CD4-positive, alpha-beta T cell (primary cell): ENCODE measurements at regions of chr4 and their contacts with region 1.

Region 1: GRCh38 chr4:39697740-39698423 is at the start of gene UBE2K:
- DNase-seq: peak; percentile 78 to 96 (median 86)
- ATAC-seq: peak; percentile 83
- H3K4me3 ChIP-seq: peak within 1 kb of the TSS; percentile 99
- H3K4me3 Mint-ChIP-seq: peak within 1 kb of the TSS; percentile 96
- H3K27ac ChIP-seq: peak within 1 kb of the TSS; percentile 92 to 93
- H3K27ac Mint-ChIP-seq: peak within 1 kb of the TSS; percentile 91
- H3K4me1 ChIP-seq: peaks cover 17% of the 10 kb centered on the region
- H3K4me1 Mint-ChIP-seq: peaks cover 56% of the 10 kb centered on the region
- H3K27me3 ChIP-seq: no peaks in the 10 kb centered on the region
- H3K27me3 Mint-ChIP-seq: no peaks in the 10 kb centered on the region
- CTCF ChIP-seq: no peak
- total RNA-seq, gene UBE2K: 35.9 to 41.3 TPM

Region 2: GRCh38 chr4:39181905-39182638 is 515.8 kb before region 1 on chr4 and contains the start of gene WDR19:
- CTCF ChIA-PET with region 1: no interaction called
- POLR2A ChIA-PET with region 1: no interaction called
- intact Hi-C with region 1: loop called in 1 of 2 experiments (anchors 5 kb)
- DNase-seq: peak; percentile 95 to 100 (median 98)
- ATAC-seq: peak; percentile 93
- H3K4me3 ChIP-seq: peak within 1 kb of the TSS; percentile 94
- H3K4me3 Mint-ChIP-seq: no peak within 1 kb of the TSS
- H3K27ac ChIP-seq: peak within 1 kb of the TSS; percentile 21 to 53
- H3K27ac Mint-ChIP-seq: no peak within 1 kb of the TSS
- H3K4me1 ChIP-seq: peaks cover 16% of the 10 kb centered on the region
- H3K4me1 Mint-ChIP-seq: peaks cover 9% of the 10 kb centered on the region
- H3K27me3 ChIP-seq: no peaks in the 10 kb centered on the region
- H3K27me3 Mint-ChIP-seq: peaks cover 3% of the 10 kb centered on the region
- CTCF ChIP-seq: peak; percentile 61
- total RNA-seq, gene WDR19: 14.5 to 16.7 TPM

Region 3: DNA sequence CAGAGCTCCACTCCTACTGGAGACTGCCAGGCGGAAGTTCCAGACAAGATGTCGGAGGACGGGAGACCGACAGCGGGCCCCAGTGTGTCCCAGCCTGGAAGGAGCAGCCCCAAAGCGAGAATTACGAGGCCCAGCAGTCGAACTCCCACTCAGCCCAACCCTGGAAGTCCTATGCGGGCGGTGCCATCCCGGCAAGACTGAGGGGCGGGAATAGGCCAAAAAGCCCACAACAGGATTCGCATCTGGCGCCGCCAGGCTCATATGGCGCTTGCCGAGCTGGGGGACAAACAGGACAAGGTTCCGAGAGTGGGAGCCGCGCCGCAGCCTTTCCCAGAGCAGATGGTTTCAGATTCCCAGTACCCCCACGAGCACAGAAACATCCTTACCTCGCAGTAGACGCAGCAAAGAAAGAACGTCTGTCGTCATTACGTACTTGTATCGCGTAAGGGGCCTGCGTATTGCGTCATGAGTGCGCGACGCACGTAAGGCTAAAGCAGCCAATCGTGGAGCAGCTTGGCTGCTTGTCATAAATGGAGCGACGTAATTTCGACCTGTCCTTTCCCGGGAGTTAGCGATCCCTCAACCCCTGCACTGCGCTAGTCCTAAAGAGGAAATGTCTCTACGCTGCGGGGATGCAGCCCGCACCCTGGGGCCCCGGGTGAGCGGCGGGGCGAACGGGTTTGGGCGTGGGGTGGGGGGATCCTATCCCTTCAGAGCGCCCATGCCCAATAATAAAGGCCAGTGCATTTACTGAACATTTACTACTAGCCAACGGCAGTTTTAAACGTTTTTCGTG is 239.2 kb before region 1 on chr4 and contains the starts of genes LIAS and RPL9:
- CTCF ChIA-PET with region 1: no interaction called
- POLR2A ChIA-PET with region 1: interaction called, 16 read pairs
- intact Hi-C with region 1: loop called in 1 of 2 experiments (anchors 2 kb)
- DNase-seq: peak; percentile 86 to 98 (median 92)
- ATAC-seq: peak; percentile 78
- H3K4me3 ChIP-seq: peak within 1 kb of the TSS; percentile 68
- H3K4me3 Mint-ChIP-seq: peak within 1 kb of the TSS; percentile 96
- H3K27ac ChIP-seq: peak within 1 kb of the TSS; percentile 92 to 98
- H3K27ac Mint-ChIP-seq: peak within 1 kb of the TSS; percentile 100
- H3K4me1 ChIP-seq: peaks cover 26% of the 10 kb centered on the region
- H3K4me1 Mint-ChIP-seq: peaks cover 49% of the 10 kb centered on the region
- H3K27me3 ChIP-seq: no peaks in the 10 kb centered on the region
- H3K27me3 Mint-ChIP-seq: no peaks in the 10 kb centered on the region
- CTCF ChIP-seq: no peak
- total RNA-seq, gene LIAS: 10.0 to 10.1 TPM
- total RNA-seq, gene RPL9: 2,639 to 2,826 TPM

Region 4: DNA sequence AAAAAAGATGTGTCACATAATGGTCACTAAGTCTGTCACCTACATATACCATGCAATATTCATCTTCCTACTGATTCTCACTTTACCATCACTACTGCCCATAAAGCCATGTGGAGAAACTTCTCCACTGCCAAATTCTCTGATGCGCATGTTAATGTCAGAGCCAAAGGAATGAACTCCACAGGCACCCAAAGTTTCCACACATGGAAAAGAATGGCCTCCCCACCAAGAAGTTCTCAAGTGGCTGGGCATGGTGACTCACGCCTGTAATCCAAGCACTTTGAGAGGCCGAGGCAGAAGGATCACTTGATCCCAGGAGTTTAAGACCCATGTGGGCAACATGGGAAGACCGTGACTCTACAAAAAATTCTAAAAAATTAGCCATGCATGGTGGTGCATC is 126.8 kb before region 1 on chr4:
- CTCF ChIA-PET with region 1: no interaction called
- POLR2A ChIA-PET with region 1: no interaction called
- intact Hi-C with region 1: no loop called
- DNase-seq: no peak
- ATAC-seq: no peak
- H3K4me3 ChIP-seq: no peak overlapping the region
- H3K4me3 Mint-ChIP-seq: no peak overlapping the region
- H3K27ac ChIP-seq: no peak overlapping the region
- H3K27ac Mint-ChIP-seq: no peak overlapping the region
- H3K4me1 ChIP-seq: no peaks in the 10 kb centered on the region
- H3K4me1 Mint-ChIP-seq: peaks cover 4% of the 10 kb centered on the region
- H3K27me3 ChIP-seq: no peaks in the 10 kb centered on the region
- H3K27me3 Mint-ChIP-seq: no peaks in the 10 kb centered on the region
- CTCF ChIP-seq: no peak

Region 5: GRCh38 chr4:39638354-39639240 is 59.3 kb before region 1 on chr4 and contains the start of gene SMIM14:
- CTCF ChIA-PET with region 1: no interaction called
- POLR2A ChIA-PET with region 1: interaction called, 27 read pairs
- intact Hi-C with region 1: loop called in 1 of 2 experiments (anchors 2 kb)
- DNase-seq: peak; percentile 65 to 95 (median 84)
- ATAC-seq: peak; percentile 79
- H3K4me3 ChIP-seq: peak within 1 kb of the TSS; percentile 96
- H3K4me3 Mint-ChIP-seq: peak within 1 kb of the TSS; percentile 88
- H3K27ac ChIP-seq: peak within 1 kb of the TSS; percentile 78 to 90
- H3K27ac Mint-ChIP-seq: peak within 1 kb of the TSS; percentile 85
- H3K4me1 ChIP-seq: peaks cover 25% of the 10 kb centered on the region
- H3K4me1 Mint-ChIP-seq: peaks cover 50% of the 10 kb centered on the region
- H3K27me3 ChIP-seq: no peaks in the 10 kb centered on the region
- H3K27me3 Mint-ChIP-seq: no peaks in the 10 kb centered on the region
- CTCF ChIP-seq: no peak
- total RNA-seq, gene SMIM14: 2.0 to 3.1 TPM

Region 6: GRCh38 chr4:39754309-39754708 is 56.4 kb after region 1 on chr4:
- CTCF ChIA-PET with region 1: no interaction called
- POLR2A ChIA-PET with region 1: no interaction called
- intact Hi-C with region 1: loop called in 1 of 2 experiments (anchors 10 kb)
- DNase-seq: no peak
- ATAC-seq: no peak
- H3K4me3 ChIP-seq: no peak overlapping the region
- H3K4me3 Mint-ChIP-seq: no peak overlapping the region
- H3K27ac ChIP-seq: no peak overlapping the region
- H3K27ac Mint-ChIP-seq: peak overlapping the region; percentile 2
- H3K4me1 ChIP-seq: no peaks in the 10 kb centered on the region
- H3K4me1 Mint-ChIP-seq: no peaks in the 10 kb centered on the region
- H3K27me3 ChIP-seq: no peaks in the 10 kb centered on the region
- H3K27me3 Mint-ChIP-seq: no peaks in the 10 kb centered on the region
- CTCF ChIP-seq: no peak

Region 7: DNA sequence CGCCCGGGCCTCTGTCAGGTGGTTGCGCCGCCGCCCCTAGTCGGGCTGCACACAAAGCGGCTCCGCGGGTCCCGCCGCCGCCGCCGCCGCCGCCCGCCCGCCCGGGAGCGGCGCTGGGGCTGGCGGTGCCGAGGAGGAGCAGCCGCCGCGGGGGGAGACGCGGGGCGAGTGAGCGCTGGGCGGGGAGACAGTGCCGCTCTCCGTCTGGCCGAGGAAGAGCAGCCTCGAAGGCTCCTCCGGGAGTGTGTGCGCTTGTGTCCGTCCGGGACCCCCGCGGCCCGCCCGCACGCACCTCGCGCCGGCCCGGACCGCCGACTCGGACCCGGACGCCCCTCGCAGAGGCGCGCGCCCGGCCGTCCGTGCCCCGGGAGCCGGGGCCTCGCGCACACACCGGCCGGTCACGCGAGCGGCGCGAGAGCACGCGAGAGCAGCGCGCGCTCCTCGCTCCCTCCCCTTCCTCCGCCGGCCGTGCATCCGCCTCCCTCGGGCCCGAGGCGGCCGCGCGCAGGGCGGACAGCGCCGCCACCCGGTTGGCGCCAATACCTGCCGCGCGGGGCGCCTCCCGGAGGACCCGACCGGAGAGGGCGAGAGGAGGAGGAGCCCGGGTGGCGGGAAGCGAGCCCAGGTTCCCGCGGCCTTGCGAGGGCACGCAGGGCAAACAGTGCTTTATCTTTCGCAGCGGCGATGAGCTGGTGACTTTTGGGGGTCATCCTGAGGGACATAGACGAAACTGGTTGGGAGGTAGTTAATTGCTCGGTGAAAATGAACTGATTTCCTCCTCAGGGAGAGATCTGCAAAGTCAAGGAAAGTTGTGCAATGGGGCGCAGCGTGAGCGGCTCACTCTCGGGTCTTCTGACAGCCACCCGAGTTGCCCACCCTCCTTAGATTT is 279.9 kb after region 1 on chr4 and contains the start of gene PDS5A:
- CTCF ChIA-PET with region 1: interaction called, 4 read pairs
- POLR2A ChIA-PET with region 1: interaction called, 5 read pairs
- intact Hi-C with region 1: loop called (anchors 1 to 2 kb)
- DNase-seq: peak; percentile 76 to 96 (median 86)
- ATAC-seq: peak; percentile 85
- H3K4me3 ChIP-seq: peak within 1 kb of the TSS; percentile 90
- H3K4me3 Mint-ChIP-seq: peak within 1 kb of the TSS; percentile 86
- H3K27ac ChIP-seq: peak within 1 kb of the TSS; percentile 78 to 92
- H3K27ac Mint-ChIP-seq: peak within 1 kb of the TSS; percentile 93
- H3K4me1 ChIP-seq: peaks cover 36% of the 10 kb centered on the region
- H3K4me1 Mint-ChIP-seq: peaks cover 34% of the 10 kb centered on the region
- H3K27me3 ChIP-seq: no peaks in the 10 kb centered on the region
- H3K27me3 Mint-ChIP-seq: no peaks in the 10 kb centered on the region
- CTCF ChIP-seq: peak; percentile 73
- total RNA-seq, gene PDS5A: 80.0 to 80.6 TPM

Region 8: DNA sequence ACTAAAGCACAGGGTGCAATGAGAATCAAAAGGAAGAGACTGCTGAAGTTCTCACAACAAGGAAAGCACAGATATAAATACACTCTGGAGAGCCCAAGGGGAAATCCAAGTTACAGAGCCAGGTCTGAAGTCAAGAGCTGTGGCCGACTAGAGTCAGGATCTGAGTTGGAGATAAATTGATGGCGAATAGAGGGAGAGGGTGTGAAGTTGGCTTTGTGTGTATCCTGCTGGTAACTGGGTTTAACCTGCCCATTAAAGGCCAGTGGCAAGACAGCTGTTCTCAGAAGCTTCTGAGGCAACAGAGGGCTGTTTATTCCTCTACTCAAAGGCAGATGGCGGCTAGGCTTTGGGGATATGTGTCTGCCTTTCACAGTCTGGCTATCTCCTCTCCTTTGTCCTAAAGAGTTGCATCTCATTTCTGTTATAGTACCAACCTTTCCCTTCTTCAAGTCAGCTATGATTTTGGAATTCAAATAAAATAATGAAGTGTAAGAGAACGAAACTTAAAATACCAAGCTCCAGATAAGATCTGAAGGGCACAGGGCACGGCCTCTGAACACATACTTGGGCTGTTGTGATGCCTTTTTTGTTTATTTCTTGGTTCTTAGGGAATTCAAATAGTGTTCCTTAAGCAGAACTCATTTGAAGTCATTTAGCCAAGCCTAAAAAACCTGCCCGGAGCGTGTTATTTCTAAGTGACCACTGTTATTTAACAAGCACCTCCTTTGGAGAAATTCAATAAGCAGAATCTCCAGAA is 1374.3 kb after region 1 on chr4:
- CTCF ChIA-PET with region 1: no interaction called
- POLR2A ChIA-PET with region 1: no interaction called
- intact Hi-C with region 1: no loop called
- DNase-seq: no peak
- ATAC-seq: no peak
- H3K4me3 ChIP-seq: no peak overlapping the region
- H3K4me3 Mint-ChIP-seq: no peak overlapping the region
- H3K27ac ChIP-seq: no peak overlapping the region
- H3K27ac Mint-ChIP-seq: no peak overlapping the region
- H3K4me1 ChIP-seq: no peaks in the 10 kb centered on the region
- H3K4me1 Mint-ChIP-seq: no peaks in the 10 kb centered on the region
- H3K27me3 ChIP-seq: no peaks in the 10 kb centered on the region
- H3K27me3 Mint-ChIP-seq: peaks cover 8% of the 10 kb centered on the region
- CTCF ChIP-seq: no peak